HepG2 (cell line): ENCODE measurements at regions of chr2 and their contacts with region 1.

Region 1: GRCh38 chr2:179218848-179219594 is 45.6 kb downstream of the SESTD1 start:
- DNase-seq: peak; percentile 73
- ATAC-seq: peak; percentile 94
- H3K4me3 ChIP-seq: no peak overlapping the region
- H3K27ac ChIP-seq: no peak overlapping the region
- H3K4me1 ChIP-seq: no peaks in the 10 kb centered on the region; the same call in 1 of the 2 replicates
- H3K27me3 ChIP-seq: no peaks in the 10 kb centered on the region
- CTCF ChIP-seq: peak; percentile 92
- EP300 ChIP-seq: no peak
- POLR2A ChIP-seq: no peak
- RAD21 ChIP-seq: peak; percentile 86

Region 2: DNA sequence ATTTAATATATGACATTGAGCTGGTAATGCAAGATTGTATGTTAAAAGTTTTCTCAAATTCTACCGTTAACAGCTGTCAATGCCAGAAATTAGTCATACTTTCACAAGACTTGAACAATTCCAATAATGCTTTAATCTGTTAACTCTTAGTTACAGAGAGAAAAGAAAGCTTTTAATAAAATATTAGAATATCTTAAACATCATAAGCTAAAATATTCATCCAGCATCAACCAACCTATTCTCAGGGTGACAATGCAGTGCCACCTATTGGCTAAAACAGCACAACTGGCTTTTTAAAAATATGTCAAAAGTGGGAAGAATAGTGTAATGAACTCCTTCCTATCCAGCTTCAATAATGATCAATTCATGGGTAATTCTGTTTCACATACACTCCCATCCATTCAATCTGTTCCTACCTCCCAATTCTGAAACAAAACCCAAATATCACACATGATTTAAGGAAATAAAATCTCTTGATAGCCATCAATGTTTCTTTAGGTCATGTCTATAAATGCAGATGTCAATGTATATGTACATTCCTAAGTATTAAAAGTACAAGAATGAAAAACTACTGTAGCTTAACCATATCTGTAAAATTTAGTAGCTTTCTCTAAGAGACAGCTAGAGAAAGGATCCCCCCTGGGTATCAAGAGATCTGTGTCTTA is 89.3 kb before region 1 on chr2:
- CTCF ChIA-PET with region 1: no interaction called
- POLR2A ChIA-PET with region 1: no interaction called
- in situ Hi-C with region 1: no loop called
- intact Hi-C with region 1: no loop called
- DNase-seq: no peak
- ATAC-seq: peak; percentile 53; the same call in 1 of the 3 replicates
- H3K4me3 ChIP-seq: no peak overlapping the region
- H3K27ac ChIP-seq: no peak overlapping the region
- H3K4me1 ChIP-seq: no peaks in the 10 kb centered on the region
- H3K27me3 ChIP-seq: no peaks in the 10 kb centered on the region
- CTCF ChIP-seq: peak; percentile 65
- EP300 ChIP-seq: no peak
- POLR2A ChIP-seq: no peak
- RAD21 ChIP-seq: no peak

Region 3: GRCh38 chr2:179165356-179166000 is 53.5 kb before region 1 on chr2:
- CTCF ChIA-PET with region 1: no interaction called
- POLR2A ChIA-PET with region 1: no interaction called
- in situ Hi-C with region 1: no loop called
- intact Hi-C with region 1: no loop called
- DNase-seq: no peak
- ATAC-seq: peak; percentile 29; the same call in 2 of the 3 replicates
- H3K4me3 ChIP-seq: no peak overlapping the region
- H3K27ac ChIP-seq: no peak overlapping the region
- H3K4me1 ChIP-seq: no peaks in the 10 kb centered on the region
- H3K27me3 ChIP-seq: no peaks in the 10 kb centered on the region
- CTCF ChIP-seq: no peak
- EP300 ChIP-seq: no peak
- POLR2A ChIP-seq: no peak
- RAD21 ChIP-seq: no peak

Region 4: DNA sequence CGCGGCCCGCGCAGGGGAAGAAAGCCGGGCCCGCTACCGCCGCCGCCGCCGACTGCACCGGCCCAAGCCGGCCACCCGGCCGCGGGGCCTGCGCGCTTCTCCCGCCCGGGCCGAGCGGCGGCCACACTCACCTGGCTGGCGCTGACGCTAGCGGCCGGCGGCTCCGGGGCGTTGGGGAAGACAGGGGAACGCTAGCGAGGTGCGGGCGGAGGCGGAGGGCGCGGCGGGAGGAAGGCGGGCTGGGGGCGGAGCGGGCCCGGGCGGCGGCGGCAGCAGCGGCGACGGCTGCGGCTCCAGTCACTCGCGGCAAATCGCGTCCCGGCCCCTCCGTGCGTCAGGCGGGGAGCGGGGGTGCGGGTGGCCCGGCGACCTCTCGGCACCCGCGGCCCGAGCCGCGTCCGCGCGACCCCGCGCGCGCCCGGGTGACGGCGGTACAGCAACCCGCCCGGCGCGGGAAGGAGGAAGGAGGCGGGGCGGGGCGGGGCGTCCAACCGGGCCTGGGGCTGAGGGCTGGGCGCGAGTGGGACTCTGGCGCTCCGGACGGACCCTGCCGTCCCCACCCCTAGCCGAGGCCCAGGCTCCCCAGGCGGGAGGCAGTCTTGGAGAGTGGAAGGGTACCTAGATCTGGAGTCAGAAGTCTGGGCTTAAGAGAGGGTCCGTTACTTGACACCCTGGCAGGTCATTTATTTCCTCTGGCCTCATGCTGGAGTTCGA is 45.5 kb after region 1 on chr2 and contains the start of gene SESTD1:
- CTCF ChIA-PET with region 1: no interaction called
- POLR2A ChIA-PET with region 1: no interaction called
- in situ Hi-C with region 1: no loop called
- intact Hi-C with region 1: loop called (anchors 5 kb)
- DNase-seq: peak; percentile 68
- ATAC-seq: peak; percentile 86
- H3K4me3 ChIP-seq: peak within 1 kb of the TSS; percentile 86 to 98 (median 96)
- H3K27ac ChIP-seq: peak within 1 kb of the TSS; percentile 87
- H3K4me1 ChIP-seq: peaks cover 68% of the 10 kb centered on the region
- H3K27me3 ChIP-seq: no peaks in the 10 kb centered on the region; a peak in 1 of 5 replicates
- CTCF ChIP-seq: no peak
- EP300 ChIP-seq: peak in 1 of 2 experiments; percentile 9; a peak in 1 of 4 replicates
- POLR2A ChIP-seq: peak in 1 of 2 experiments; percentile 66; a peak in 3 of 4 replicates
- RAD21 ChIP-seq: 0 out of 2 replicates have a peak, but pooled peaks have one; percentile 36
- total RNA-seq, gene SESTD1: 74.4 and 105 TPM in 2 replicates

Region 5: GRCh38 chr2:179410552-179411356 is 191.7 kb after region 1 on chr2:
- CTCF ChIA-PET with region 1: interaction called, 14 read pairs
- POLR2A ChIA-PET with region 1: no interaction called
- in situ Hi-C with region 1: loop called (anchors 10 kb)
- intact Hi-C with region 1: loop called (anchors 2 kb)
- DNase-seq: peak; percentile 77
- ATAC-seq: peak; percentile 96
- H3K4me3 ChIP-seq: peak overlapping the region in 1 of 3 experiments; percentile 13; a peak in 1 of 6 replicates
- H3K27ac ChIP-seq: no peak overlapping the region
- H3K4me1 ChIP-seq: peaks cover 9% of the 10 kb centered on the region; the same call in 1 of the 2 replicates
- H3K27me3 ChIP-seq: no peaks in the 10 kb centered on the region
- CTCF ChIP-seq: peak; percentile 87
- EP300 ChIP-seq: no peak
- POLR2A ChIP-seq: no peak
- RAD21 ChIP-seq: peak; percentile 74

Region 6: GRCh38 chr2:179440642-179441251 is 221.7 kb after region 1 on chr2:
- CTCF ChIA-PET with region 1: interaction called, 5 read pairs
- POLR2A ChIA-PET with region 1: no interaction called
- in situ Hi-C with region 1: no loop called
- intact Hi-C with region 1: loop called (anchors 1 kb)
- DNase-seq: peak; percentile 34
- ATAC-seq: peak; percentile 61; the same call in 2 of the 3 replicates
- H3K4me3 ChIP-seq: no peak overlapping the region
- H3K27ac ChIP-seq: no peak overlapping the region
- H3K4me1 ChIP-seq: no peaks in the 10 kb centered on the region
- H3K27me3 ChIP-seq: no peaks in the 10 kb centered on the region
- CTCF ChIP-seq: peak; percentile 51
- EP300 ChIP-seq: no peak
- POLR2A ChIP-seq: no peak
- RAD21 ChIP-seq: 0 out of 2 replicates have a peak, but pooled peaks have one; percentile 46